ENCODE measurements at regions of chr11 and their contacts with region 1.

Region 1: DNA sequence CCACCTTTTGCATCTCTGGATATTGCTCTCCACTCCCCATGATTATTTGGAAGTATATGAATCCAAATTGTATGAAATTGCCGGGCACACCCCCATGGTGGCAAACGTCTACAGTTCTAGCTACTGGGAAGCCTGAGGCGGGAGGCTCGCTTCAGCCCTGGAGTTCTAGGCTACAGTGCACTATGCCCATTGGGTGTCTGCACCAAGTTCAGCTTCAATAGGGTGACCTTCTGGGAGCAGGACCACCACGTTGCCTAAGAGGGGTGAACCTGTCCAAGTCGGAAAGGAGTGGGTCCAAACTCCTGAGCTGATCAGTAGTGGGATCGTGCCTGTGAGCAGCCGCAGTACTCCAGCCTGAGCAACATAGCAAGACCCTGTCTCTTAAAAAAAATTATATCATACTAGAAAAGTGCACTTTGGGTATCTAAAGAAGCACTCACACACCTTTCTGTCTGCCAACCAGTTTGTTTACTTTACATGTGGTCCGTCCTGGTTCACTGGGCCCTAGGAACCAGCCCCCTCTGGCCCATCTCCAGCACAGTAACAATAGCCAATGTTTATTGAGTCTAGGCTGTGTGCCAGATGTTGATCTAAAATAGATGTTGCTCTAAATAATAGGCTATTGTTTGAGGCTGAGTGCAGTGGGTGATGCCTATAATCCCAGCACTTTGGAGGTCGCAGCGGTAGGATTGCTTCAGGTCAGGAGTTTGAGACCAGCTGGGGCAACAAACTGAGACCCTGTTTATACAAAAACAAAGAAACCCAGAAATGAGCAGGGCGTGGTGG is 16.4 kb upstream of the KAT5 start:
- DNase-seq: peak; percentile 41 to 77
- ATAC-seq: peak; percentile 61 to 89 (median 76)
- H3K4me3 ChIP-seq: no peak overlapping the region
- H3K27ac ChIP-seq: peak overlapping the region in 6 of 10 donors; percentile 28 to 70 (median 59)
- H3K4me1 ChIP-seq: peaks cover 0 to 29% (median 12%) of the 10 kb centered on the region in 9 donors
- H3K27me3 ChIP-seq: no peaks in the 10 kb centered on the region
- CTCF ChIP-seq: no peak

Region 2: GRCh38 chr11:65625628-65626342 is 69.9 kb before region 1 on chr11:
- intact Hi-C with region 1: loop called in 2 of 10 experiments (anchors 10 kb)
- DNase-seq: peak; percentile 54 to 69
- ATAC-seq: peak; percentile 51 to 84 (median 78)
- H3K4me3 ChIP-seq: no peak overlapping the region
- H3K27ac ChIP-seq: peak overlapping the region in 1 of 10 donors; percentile 9
- H3K4me1 ChIP-seq: peaks cover 0 to 22% (median 7%) of the 10 kb centered on the region in 9 donors
- H3K27me3 ChIP-seq: no peaks in the 10 kb centered on the region
- CTCF ChIP-seq: peak; percentile 54 to 75 (median 69)

Region 3: GRCh38 chr11:65637794-65638317 is 57.8 kb before region 1 on chr11 and contains the start of gene SIPA1:
- intact Hi-C with region 1: loop called in 1 of 10 experiments (anchors 10 kb)
- DNase-seq: peak; percentile 83 to 85
- ATAC-seq: peak; percentile 79 to 87 (median 82)
- H3K4me3 ChIP-seq: peak within 1 kb of the TSS; percentile 74 to 90 (median 82)
- H3K27ac ChIP-seq: peak within 1 kb of the TSS; percentile 94 to 99 (median 96)
- H3K4me1 ChIP-seq: peaks cover 21 to 56% (median 50%) of the 10 kb centered on the region in 9 donors
- H3K27me3 ChIP-seq: no peaks in the 10 kb centered on the region
- CTCF ChIP-seq: peak; percentile 13 to 68 (median 52)
- total RNA-seq, gene SIPA1: 11.8 to 39.7 (median 15.6) TPM

Region 4: DNA sequence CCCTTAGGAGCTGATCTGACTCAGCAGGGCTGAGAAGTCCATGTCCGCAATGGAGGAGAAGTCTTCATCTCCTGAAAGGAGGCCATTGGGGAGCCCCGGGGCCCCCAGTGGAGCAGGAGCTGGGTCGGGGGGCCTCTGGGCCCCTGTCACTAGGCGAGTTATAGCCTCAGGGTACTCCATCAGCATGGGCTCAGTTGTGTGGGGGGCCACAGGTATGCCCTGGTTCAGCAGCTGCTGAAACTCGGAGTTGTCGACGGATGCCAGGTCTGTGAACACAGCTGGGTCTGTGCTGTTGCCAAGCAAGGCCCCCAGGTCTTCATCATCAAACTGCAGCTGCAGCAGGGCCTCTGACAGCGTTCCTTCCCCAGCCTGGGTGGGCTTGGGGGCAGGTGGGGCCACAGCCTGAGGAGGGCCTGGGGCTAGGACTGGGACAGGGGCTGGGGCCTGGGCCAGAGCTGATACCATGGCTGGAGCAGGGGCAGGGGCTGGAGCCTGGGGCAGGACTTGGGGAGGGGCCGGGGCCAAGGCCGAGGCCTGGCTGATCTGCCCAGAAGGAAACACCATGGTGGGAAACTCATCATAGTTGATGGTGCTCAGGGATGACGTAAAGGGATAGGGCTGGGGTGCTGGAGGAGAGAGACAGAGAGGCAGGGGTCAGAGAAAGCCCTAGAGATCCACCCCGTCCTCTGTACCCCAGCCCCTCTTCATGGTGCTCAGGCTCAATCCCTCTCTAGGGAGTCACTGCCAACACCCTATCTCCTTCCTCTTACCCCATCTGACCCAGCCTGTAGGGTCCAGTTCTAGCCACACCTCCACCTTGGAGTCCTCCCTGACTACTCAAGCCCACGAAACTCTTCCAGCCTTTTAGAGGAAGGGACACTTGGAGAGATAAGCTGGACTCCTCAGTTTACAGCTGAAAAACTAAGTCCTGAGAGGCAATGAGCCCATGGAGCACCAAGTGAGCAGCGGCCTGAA is 41.0 kb before region 1 on chr11:
- intact Hi-C with region 1: loop called in 1 of 10 experiments (anchors 1 kb)
- DNase-seq: peak in 1 of 2 donors; percentile 6
- ATAC-seq: no peak
- H3K4me3 ChIP-seq: no peak overlapping the region
- H3K27ac ChIP-seq: peak overlapping the region in 8 of 10 donors; percentile 91 to 99 (median 96)
- H3K4me1 ChIP-seq: peaks cover 23 to 57% (median 42%) of the 10 kb centered on the region in 9 donors
- H3K27me3 ChIP-seq: no peaks in the 10 kb centered on the region
- CTCF ChIP-seq: no peak

Region 5: DNA sequence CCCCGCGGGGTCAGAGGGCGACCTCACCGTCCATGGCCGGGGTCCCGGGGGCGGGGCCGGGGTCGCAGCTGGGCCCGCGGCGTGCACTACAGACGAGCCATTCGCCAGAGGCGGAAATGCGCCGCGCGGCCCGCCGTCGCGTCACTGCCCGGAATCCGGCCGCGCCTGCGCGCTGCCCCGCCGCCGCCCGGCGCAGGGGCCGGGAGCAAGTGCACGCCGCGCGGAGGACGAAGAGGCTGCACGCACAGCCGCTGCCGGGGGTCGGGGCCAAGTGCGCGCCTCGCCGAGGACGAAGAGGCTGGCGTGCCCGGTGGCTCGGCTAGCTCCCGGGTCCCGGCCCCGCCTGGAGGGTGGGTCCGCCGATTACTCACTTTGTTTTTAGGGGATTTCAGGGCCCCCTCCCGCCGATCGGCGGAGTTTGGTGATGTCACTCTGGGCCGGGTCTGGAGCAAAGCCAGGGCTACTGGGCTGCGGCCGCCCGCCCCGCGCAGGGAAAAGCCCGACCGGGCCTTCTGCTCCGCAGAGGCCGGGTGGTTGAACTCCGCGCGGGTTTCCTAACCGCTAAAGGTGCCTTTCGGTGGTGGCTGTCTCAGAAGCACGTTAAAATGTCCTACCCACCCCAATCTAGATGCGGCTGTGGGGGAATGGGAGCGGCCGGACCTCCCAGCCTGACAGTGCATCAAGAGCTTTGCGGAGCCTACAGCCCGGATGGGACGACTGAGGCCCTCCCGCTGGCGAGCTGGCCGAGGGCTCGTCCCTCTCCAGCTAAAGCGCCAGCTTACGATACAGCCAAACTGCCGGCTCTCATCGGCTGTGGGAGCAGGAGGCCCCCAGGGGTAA is 32.6 kb before region 1 on chr11 and contains the start of gene RELA:
- intact Hi-C with region 1: loop called in 1 of 10 experiments (anchors 5 kb)
- DNase-seq: peak; percentile 92 to 97
- ATAC-seq: peak; percentile 88 to 94 (median 90)
- H3K4me3 ChIP-seq: peak within 1 kb of the TSS; percentile 74 to 100 (median 92)
- H3K27ac ChIP-seq: peak within 1 kb of the TSS; percentile 96 to 100 (median 100)
- H3K4me1 ChIP-seq: peaks cover 7 to 42% (median 37%) of the 10 kb centered on the region in 9 donors
- H3K27me3 ChIP-seq: no peaks in the 10 kb centered on the region
- CTCF ChIP-seq: no peak
- total RNA-seq, gene RELA: 30.7 to 55.2 (median 40.0) TPM

Region 6: GRCh38 chr11:65743928-65744698 is 48.5 kb after region 1 on chr11:
- intact Hi-C with region 1: no loop called
- DNase-seq: peak in 1 of 2 donors; percentile 29
- ATAC-seq: peak in 7 of 8 donors; percentile 47 to 73 (median 52)
- H3K4me3 ChIP-seq: no peak overlapping the region
- H3K27ac ChIP-seq: no peak overlapping the region
- H3K4me1 ChIP-seq: no peaks in the 10 kb centered on the region
- H3K27me3 ChIP-seq: peaks cover 0 to 15% (median 0%) of the 10 kb centered on the region in 7 donors
- CTCF ChIP-seq: peak in 7 of 9 donors; percentile 16 to 42 (median 35)

Region 7: GRCh38 chr11:65766535-65766934 is 70.9 kb after region 1 on chr11:
- intact Hi-C with region 1: no loop called
- DNase-seq: no peak
- ATAC-seq: no peak
- H3K4me3 ChIP-seq: no peak overlapping the region
- H3K27ac ChIP-seq: no peak overlapping the region
- H3K4me1 ChIP-seq: peaks cover 0 to 13% (median 0%) of the 10 kb centered on the region in 9 donors
- H3K27me3 ChIP-seq: no peaks in the 10 kb centered on the region
- CTCF ChIP-seq: no peak

Region 8: GRCh38 chr11:65817835-65818742 is 122.4 kb after region 1 on chr11:
- intact Hi-C with region 1: loop called in 3 of 10 experiments (anchors 10 kb)
- DNase-seq: peak; percentile 94 to 97
- ATAC-seq: peak; percentile 92 to 97 (median 96)
- H3K4me3 ChIP-seq: peak overlapping the region; percentile 23 to 75 (median 62)
- H3K27ac ChIP-seq: peak overlapping the region in 9 of 10 donors; percentile 12 to 84 (median 59)
- H3K4me1 ChIP-seq: peaks cover 0 to 26% (median 9%) of the 10 kb centered on the region in 9 donors
- H3K27me3 ChIP-seq: no peaks in the 10 kb centered on the region
- CTCF ChIP-seq: peak; percentile 99 to 100 (median 100)